ENCODE measurements at regions of chr2 and their contacts with region 1.

Region 1: DNA sequence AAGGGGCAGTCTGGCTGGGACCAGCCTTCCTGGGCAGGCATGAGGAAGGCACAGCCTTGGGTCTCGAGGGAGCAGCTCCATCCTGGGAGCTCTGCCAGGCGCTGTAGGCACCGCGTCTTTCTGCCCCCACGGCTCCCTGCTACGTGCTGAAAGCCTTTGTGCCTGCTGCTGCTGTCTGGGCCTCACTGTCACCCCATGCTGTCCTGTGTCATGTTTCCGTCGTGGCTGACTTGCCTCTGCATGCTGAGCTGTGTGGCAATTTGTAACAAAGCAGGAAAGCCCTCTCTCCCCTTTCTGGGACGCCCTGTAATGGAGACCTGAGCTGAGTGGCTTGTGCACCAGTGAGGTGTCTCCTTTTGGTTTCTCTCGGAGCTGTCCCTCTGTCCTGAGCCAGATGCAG is 152.5 kb downstream of the TSN start:
- DNase-seq: no peak
- H3K4me3 ChIP-seq: no peak overlapping the region
- H3K27ac ChIP-seq: no peak overlapping the region
- H3K4me1 ChIP-seq: peaks cover 0 to 8% of the 10 kb centered on the region in 2 experiments; a peak in 1 of 4 replicates
- H3K27me3 ChIP-seq: no peaks in the 10 kb centered on the region
- CTCF ChIP-seq: no peak
- EP300 ChIP-seq: no peak
- RAD21 ChIP-seq: no peak

Region 2: GRCh38 chr2:121897335-121897970 is 10.5 kb before region 1 on chr2:
- CTCF ChIA-PET with region 1: interaction called, 10 read pairs
- POLR2A ChIA-PET with region 1: no interaction called
- DNase-seq: peak; percentile 56
- H3K4me3 ChIP-seq: no peak overlapping the region
- H3K27ac ChIP-seq: no peak overlapping the region
- H3K4me1 ChIP-seq: peaks cover 0 to 2% of the 10 kb centered on the region in 2 experiments; a peak in 1 of 4 replicates
- H3K27me3 ChIP-seq: no peaks in the 10 kb centered on the region
- CTCF ChIP-seq: peak; percentile 55
- EP300 ChIP-seq: no peak
- RAD21 ChIP-seq: peak; percentile 59